CD14-positive monocyte (primary cell): ENCODE measurements at regions of chr11 and their contacts with region 1.

Region 1: DNA sequence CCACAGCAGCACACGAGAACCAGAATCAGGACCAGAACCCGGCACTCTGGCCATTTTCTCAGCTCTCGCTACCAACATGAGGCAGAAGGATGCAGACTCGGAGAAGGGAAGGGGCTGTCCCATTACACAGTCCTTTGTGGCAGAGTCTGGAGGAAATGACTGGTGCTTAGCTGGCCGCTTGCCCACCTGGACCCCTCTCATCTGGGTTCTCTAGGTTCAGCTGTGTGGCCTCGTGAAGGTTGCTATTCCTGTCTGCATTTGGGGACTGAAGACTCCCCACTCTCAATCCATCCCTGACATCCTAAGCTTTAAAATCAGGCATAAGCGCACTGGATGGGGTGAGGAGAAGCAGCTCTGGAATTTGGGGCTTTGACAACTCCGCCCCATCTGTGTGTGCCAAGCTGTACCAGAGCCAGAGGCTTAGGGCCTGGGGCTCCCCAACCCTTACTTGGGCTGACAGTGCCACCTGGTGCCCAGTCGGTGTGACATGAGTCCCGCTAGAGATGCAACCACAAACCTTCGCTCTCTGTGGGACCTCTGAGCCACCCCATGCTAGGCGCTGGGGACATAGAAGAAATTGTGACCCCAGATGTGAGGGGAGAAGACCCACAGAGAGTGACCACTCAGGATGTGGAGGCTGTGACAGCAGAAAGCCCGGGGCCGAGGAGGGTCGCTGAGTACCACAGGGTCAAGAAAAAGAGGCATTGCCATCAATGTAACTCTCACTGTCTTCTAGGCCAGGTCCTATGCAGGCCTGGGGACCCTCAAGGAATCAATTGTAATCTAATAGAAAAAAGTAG is 35.9 kb upstream of the FCHSD2 start:
- DNase-seq: peak; percentile 70 to 85 (median 81)
- H3K4me3 ChIP-seq: no peak overlapping the region
- H3K4me3 Mint-ChIP-seq: no peak overlapping the region
- H3K27ac ChIP-seq: no peak overlapping the region
- H3K27ac Mint-ChIP-seq: peak overlapping the region in 1 of 7 donors; percentile 1
- H3K4me1 ChIP-seq: peaks cover 7 to 9% of the 10 kb centered on the region in 2 donors
- H3K4me1 Mint-ChIP-seq: peaks cover 16% of the 10 kb centered on the region
- H3K27me3 ChIP-seq: no peaks in the 10 kb centered on the region
- H3K27me3 Mint-ChIP-seq: peaks cover 0 to 4% (median 4%) of the 10 kb centered on the region in 3 donors
- CTCF ChIP-seq: peak; percentile 87

Region 2: DNA sequence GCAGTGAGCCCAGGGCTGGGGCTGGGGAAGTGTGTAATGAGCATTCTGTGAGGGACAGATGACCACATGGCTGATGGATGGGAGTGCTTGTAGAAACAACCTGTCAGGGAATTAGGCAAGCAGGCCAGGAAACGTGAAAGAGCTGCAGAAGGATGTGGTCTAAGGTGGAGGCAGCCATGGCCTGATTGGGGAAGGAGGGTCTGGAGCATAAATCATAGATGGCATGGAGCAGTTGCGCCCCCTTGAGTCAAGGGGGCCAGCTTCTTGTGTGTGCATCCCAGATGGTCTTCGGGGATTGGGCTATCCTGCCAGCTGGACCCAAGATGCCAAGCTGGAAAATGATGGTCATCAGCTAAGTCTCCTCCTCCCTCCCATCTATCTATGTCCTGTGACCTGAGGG is 624.3 kb before region 1 on chr11:
- intact Hi-C with region 1: no loop called
- DNase-seq: peak; percentile 22 to 35 (median 35)
- H3K4me3 ChIP-seq: no peak overlapping the region
- H3K4me3 Mint-ChIP-seq: no peak overlapping the region
- H3K27ac ChIP-seq: no peak overlapping the region
- H3K27ac Mint-ChIP-seq: no peak overlapping the region
- H3K4me1 ChIP-seq: no peaks in the 10 kb centered on the region
- H3K4me1 Mint-ChIP-seq: peaks cover 2% of the 10 kb centered on the region
- H3K27me3 ChIP-seq: peaks cover 0 to 17% of the 10 kb centered on the region in 2 donors
- H3K27me3 Mint-ChIP-seq: peaks cover 6 to 29% (median 8%) of the 10 kb centered on the region in 3 donors
- CTCF ChIP-seq: peak; percentile 7

Region 3: DNA sequence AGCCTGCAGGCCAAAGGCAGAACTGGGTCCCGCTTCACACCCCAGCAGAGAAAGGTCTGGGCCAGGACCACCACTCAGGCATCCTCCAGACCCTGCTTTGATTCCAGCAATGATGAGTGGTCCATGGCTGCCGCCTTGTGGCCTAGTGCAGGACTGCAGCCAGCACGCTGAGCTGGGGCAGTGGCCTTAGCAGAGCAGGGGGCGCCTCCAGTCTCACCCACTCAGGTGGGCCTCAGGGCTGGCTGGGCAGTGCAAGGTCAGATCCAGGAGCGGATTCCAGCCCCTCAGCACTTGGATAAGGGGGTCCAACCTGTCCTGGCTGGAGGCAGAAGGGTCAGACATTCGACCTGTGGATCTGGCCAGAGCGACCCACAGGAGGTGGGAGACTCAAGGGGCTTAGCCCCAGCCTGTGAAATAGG is 494.2 kb before region 1 on chr11:
- intact Hi-C with region 1: loop called in 1 of 2 experiments (anchors 10 kb)
- DNase-seq: peak in 2 of 3 donors; percentile 46 to 53
- H3K4me3 ChIP-seq: no peak overlapping the region
- H3K4me3 Mint-ChIP-seq: no peak overlapping the region
- H3K27ac ChIP-seq: no peak overlapping the region
- H3K27ac Mint-ChIP-seq: peak overlapping the region in 1 of 7 donors; percentile 25
- H3K4me1 ChIP-seq: no peaks in the 10 kb centered on the region
- H3K4me1 Mint-ChIP-seq: peaks cover 8% of the 10 kb centered on the region
- H3K27me3 ChIP-seq: peaks cover 0 to 7% of the 10 kb centered on the region in 2 donors
- H3K27me3 Mint-ChIP-seq: peaks cover 19 to 23% (median 21%) of the 10 kb centered on the region in 3 donors
- CTCF ChIP-seq: peak; percentile 91

Region 4: GRCh38 chr11:72712168-72712751 is 465.7 kb before region 1 on chr11:
- intact Hi-C with region 1: loop called in 1 of 2 experiments (anchors 10 kb)
- DNase-seq: peak; percentile 32 to 66 (median 60)
- H3K4me3 ChIP-seq: no peak overlapping the region
- H3K4me3 Mint-ChIP-seq: peak overlapping the region; percentile 64 to 72
- H3K27ac ChIP-seq: peak overlapping the region; percentile 59 to 74
- H3K27ac Mint-ChIP-seq: peak overlapping the region; percentile 65 to 96 (median 90)
- H3K4me1 ChIP-seq: peaks cover 14 to 43% of the 10 kb centered on the region in 2 donors
- H3K4me1 Mint-ChIP-seq: peaks cover 34% of the 10 kb centered on the region
- H3K27me3 ChIP-seq: no peaks in the 10 kb centered on the region
- H3K27me3 Mint-ChIP-seq: peaks cover 0 to 7% (median 0%) of the 10 kb centered on the region in 3 donors
- CTCF ChIP-seq: no peak

Region 5: DNA sequence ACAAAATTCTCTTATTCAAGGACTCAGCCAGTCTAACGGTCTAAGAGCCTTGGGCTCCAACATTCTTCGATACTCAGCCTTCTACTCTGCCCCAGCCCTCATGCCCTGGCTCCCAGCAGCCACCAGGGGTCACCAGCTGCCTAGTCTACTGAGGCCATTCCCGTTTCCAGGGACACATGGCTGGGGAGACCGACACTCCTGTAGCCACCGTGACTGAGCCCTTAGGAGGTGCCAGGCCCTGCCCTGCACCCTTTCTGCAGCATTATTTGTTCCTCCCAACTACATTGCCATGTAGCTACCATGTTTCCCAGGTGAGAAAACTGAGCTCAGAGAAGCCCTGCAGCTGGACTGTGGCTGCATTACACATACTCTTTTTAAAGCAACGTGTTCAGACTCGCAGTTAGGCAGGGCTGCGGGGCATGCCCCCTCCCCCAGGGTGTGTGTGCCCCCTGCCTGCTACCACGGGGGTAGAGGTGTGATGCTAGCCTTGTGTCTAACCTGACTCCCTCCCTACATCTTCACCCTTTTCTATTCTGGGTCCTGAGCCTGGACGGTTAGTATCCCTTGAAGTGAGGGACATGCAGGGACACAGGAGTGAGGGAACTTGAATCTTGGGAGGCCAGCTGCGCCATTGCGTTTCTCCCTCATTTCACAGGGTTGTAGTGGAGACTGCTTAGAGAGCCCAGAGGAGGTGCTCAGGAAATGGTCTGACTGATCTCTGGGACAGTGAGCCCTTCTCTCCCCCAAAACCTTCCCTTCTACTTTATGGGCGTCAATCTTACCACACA is 346.3 kb before region 1 on chr11:
- intact Hi-C with region 1: loop called (anchors 2 to 5 kb)
- DNase-seq: peak; percentile 49 to 66 (median 64)
- H3K4me3 ChIP-seq: no peak overlapping the region
- H3K4me3 Mint-ChIP-seq: no peak overlapping the region
- H3K27ac ChIP-seq: peak overlapping the region; percentile 36 to 57
- H3K27ac Mint-ChIP-seq: peak overlapping the region in 6 of 7 donors; percentile 8 to 77 (median 57)
- H3K4me1 ChIP-seq: peaks cover 46 to 49% of the 10 kb centered on the region in 2 donors
- H3K4me1 Mint-ChIP-seq: peaks cover 58% of the 10 kb centered on the region
- H3K27me3 ChIP-seq: no peaks in the 10 kb centered on the region
- H3K27me3 Mint-ChIP-seq: peaks cover 0 to 2% (median 2%) of the 10 kb centered on the region in 3 donors
- CTCF ChIP-seq: peak; percentile 89

Region 6: GRCh38 chr11:72924568-72925190 is 253.3 kb before region 1 on chr11:
- intact Hi-C with region 1: loop called (anchors 2 to 5 kb)
- DNase-seq: peak; percentile 12 to 54 (median 37)
- H3K4me3 ChIP-seq: no peak overlapping the region
- H3K4me3 Mint-ChIP-seq: no peak overlapping the region
- H3K27ac ChIP-seq: peak overlapping the region in 1 of 2 donors; percentile 55
- H3K27ac Mint-ChIP-seq: peak overlapping the region in 2 of 7 donors; percentile 79 to 81
- H3K4me1 ChIP-seq: peaks cover 7 to 16% of the 10 kb centered on the region in 2 donors
- H3K4me1 Mint-ChIP-seq: peaks cover 21% of the 10 kb centered on the region
- H3K27me3 ChIP-seq: no peaks in the 10 kb centered on the region
- H3K27me3 Mint-ChIP-seq: no peaks in the 10 kb centered on the region
- CTCF ChIP-seq: peak; percentile 71

Region 7: GRCh38 chr11:73360336-73361013 is 182.5 kb after region 1 on chr11:
- intact Hi-C with region 1: no loop called
- DNase-seq: no peak
- H3K4me3 ChIP-seq: no peak overlapping the region
- H3K4me3 Mint-ChIP-seq: no peak overlapping the region
- H3K27ac ChIP-seq: no peak overlapping the region
- H3K27ac Mint-ChIP-seq: no peak overlapping the region
- H3K4me1 ChIP-seq: no peaks in the 10 kb centered on the region
- H3K4me1 Mint-ChIP-seq: no peaks in the 10 kb centered on the region
- H3K27me3 ChIP-seq: no peaks in the 10 kb centered on the region
- H3K27me3 Mint-ChIP-seq: peaks cover 0 to 5% (median 1%) of the 10 kb centered on the region in 3 donors
- CTCF ChIP-seq: peak; percentile 30